A673 (cell line): ENCODE measurements at regions of chr9 and their contacts with region 1.

Region 1: GRCh38 chr9:128361986-128362646 is 9.1 kb upstream of the URM1 start:
- DNase-seq: peak; percentile 90
- H3K4me3 ChIP-seq: peak overlapping the region; percentile 36
- H3K27ac ChIP-seq: no peak overlapping the region
- H3K4me1 ChIP-seq: peaks cover 24% of the 10 kb centered on the region
- H3K27me3 ChIP-seq: no peaks in the 10 kb centered on the region
- CTCF ChIP-seq: peak; percentile 95

Region 2: GRCh38 chr9:128412120-128412790 is 50.1 kb after region 1 on chr9:
- CTCF ChIA-PET with region 1: interaction called, 27 read pairs
- POLR2A ChIA-PET with region 1: no interaction called
- intact Hi-C with region 1: loop called (anchors 1 kb)
- DNase-seq: peak; percentile 88
- H3K4me3 ChIP-seq: no peak overlapping the region
- H3K27ac ChIP-seq: no peak overlapping the region
- H3K4me1 ChIP-seq: peaks cover 15% of the 10 kb centered on the region
- H3K27me3 ChIP-seq: no peaks in the 10 kb centered on the region
- CTCF ChIP-seq: peak; percentile 87

Region 3: DNA sequence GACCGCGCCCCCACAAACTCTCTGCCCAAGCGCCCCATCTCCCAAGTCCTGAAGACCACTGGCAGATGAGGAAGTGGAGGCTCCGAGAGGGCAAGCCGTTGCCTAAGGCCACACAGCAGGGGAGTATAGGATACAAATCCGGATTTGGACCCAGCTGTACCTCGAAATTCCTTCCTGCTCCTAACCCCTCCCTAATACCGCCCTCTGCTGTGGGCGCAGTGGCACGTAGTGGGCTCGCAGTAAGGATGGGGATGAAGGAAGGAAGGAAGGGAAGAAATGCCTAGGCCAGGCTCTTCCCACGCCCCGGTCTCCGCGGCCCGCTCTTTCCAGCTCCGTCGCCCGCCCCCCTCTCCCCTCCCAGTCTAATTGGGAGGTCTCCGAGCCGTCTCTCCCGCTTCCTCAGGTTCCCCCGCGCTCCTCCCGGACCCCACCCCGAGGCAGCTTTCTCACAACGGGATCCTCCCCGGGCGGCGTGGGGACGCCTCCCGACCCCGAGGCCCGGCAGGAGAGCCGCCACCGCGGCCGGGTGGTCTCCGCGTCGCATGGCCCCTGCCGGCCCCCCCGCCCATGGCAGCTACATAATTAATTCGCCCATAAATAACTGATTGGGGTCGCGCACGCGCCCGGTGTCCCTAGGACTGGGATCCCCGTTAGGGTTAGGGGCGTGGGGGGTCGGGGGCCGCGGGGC is 1119.9 kb after region 1 on chr9:
- CTCF ChIA-PET with region 1: no interaction called
- POLR2A ChIA-PET with region 1: no interaction called
- intact Hi-C with region 1: no loop called
- DNase-seq: peak; percentile 62
- H3K4me3 ChIP-seq: peak overlapping the region; percentile 54
- H3K27ac ChIP-seq: peak overlapping the region; percentile 96
- H3K4me1 ChIP-seq: peaks cover 36% of the 10 kb centered on the region
- H3K27me3 ChIP-seq: no peaks in the 10 kb centered on the region
- CTCF ChIP-seq: 0 out of 2 replicates have a peak, but pooled peaks have one; percentile 19